Activated B cell treated with CpG ODN at 0.5 μM for 24 hours (primary cell): ENCODE measurements at regions of chr1 and their contacts with region 1.

Region 1: GRCh38 chr1:43358746-43359693 is at the start of gene CDC20:
- DNase-seq: peak; percentile 96
- ATAC-seq: peak; percentile 99
- H3K4me3 Mint-ChIP-seq: peak within 1 kb of the TSS; percentile 91
- H3K27ac Mint-ChIP-seq: peak within 1 kb of the TSS; percentile 91
- H3K4me1 Mint-ChIP-seq: peaks cover 16% of the 10 kb centered on the region
- H3K27me3 Mint-ChIP-seq: no peaks in the 10 kb centered on the region
- CTCF ChIP-seq: no peak
- total RNA-seq, gene CDC20: 3.2 and 4.2 TPM in 2 replicates

Region 2: GRCh38 chr1:43348809-43349583 is 10.0 kb before region 1 on chr1:
- CTCF ChIA-PET with region 1: no interaction called
- POLR2A ChIA-PET with region 1: interaction called, 11 read pairs
- intact Hi-C with region 1: loop called (anchors 1 kb)
- DNase-seq: peak; percentile 65
- ATAC-seq: peak; percentile 86
- H3K4me3 Mint-ChIP-seq: peak overlapping the region; percentile 85
- H3K27ac Mint-ChIP-seq: peak overlapping the region; percentile 88
- H3K4me1 Mint-ChIP-seq: peaks cover 11% of the 10 kb centered on the region
- H3K27me3 Mint-ChIP-seq: no peaks in the 10 kb centered on the region
- CTCF ChIP-seq: no peak

Region 3: DNA sequence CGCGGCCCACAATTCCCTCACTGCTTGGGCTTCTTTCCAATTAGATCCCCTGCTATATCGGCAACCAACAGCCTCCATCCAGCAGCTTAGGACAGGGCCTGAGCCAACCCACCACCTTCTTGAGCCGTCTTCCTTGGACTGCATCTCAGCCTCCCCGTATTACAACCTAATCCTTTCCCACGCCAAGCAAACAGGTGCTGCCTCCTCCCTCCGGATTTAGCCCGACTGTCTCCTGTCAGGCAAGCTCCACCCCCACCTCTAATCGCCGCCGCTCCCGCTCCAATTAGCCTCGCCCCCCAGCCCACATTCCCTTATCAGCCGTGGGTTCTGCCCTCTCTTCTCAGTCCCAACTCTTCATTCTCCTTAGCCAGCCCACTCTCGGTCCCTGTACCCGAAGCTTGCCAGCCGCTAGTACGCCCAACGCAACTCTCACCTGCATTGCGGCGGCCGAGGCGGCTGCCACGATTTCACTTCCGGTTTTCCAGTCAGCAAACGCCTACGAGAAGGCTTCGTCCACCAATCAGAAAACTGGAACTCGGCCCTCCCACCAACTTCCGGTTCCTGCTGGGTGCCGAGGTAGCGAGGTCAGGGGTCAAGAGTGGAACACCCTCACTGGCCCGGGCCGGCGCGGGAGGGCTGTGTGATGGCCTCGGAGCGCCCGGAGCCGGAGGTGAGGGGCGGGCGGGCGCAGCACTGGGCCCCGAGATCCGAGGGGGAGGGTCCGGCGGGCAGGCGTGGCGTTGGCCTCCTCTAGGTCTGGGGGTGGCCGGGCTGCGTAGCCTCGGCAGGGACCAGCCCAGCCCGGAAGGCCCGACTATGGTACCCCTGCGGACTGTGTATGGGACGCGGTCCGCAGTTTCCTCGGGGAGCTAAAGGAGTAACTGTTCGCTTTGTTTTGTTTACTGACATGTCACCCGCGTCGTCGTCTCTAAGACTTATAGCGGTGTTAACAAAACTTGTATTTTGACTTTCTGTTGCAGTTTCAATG is 30.6 kb after region 1 on chr1 and contains the starts of genes MED8 and SZT2:
- CTCF ChIA-PET with region 1: no interaction called
- POLR2A ChIA-PET with region 1: interaction called, 16 read pairs
- intact Hi-C with region 1: loop called (anchors 1 kb)
- DNase-seq: peak; percentile 90
- ATAC-seq: peak; percentile 91
- H3K4me3 Mint-ChIP-seq: peak within 1 kb of the TSS; percentile 99
- H3K27ac Mint-ChIP-seq: peak within 1 kb of the TSS; percentile 91
- H3K4me1 Mint-ChIP-seq: peaks cover 38% of the 10 kb centered on the region
- H3K27me3 Mint-ChIP-seq: no peaks in the 10 kb centered on the region
- CTCF ChIP-seq: no peak
- total RNA-seq, gene MED8: 33.8 and 37.2 TPM in 2 replicates
- total RNA-seq, gene SZT2: 108 and 139 TPM in 2 replicates

Region 4: DNA sequence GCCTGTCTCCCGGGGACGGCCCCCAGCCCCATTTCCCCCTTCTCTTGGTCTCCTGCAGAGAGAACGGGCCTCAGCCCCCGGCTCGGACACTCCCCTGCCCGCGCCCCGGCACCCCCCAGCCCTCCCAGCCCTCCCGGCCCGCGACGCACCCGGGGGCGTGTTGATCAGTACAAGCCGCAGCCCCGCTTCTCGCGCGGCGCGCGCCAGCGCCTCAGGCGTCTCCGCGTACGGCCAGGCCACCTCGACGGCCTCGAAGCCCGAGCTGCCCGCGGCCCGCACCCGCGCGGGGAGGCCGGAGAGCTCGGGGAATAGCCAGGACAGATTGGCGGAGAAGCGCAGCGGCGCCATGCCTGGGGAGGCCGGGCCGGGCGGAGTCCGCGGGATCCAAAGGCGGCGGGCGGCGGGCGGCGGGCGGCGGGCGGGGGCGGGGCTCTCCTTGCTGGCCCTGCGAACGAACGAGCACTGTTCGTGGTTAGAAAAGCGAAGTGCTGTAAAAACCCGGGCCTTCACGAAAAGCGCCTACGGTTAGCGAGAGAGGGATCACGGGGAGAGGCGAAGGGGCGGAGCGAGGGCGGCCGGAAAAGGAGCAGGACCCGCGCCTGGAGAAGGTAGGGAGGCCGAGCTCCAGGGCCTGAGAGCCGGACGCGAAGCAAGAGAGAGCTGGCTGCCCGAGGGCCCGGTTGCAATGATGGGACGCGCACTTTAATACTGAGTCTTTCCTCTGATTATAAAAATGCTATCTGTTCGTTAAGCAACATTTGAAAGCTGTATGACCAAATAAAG is 94.6 kb after region 1 on chr1 and contains the start of gene HYI:
- CTCF ChIA-PET with region 1: no interaction called
- POLR2A ChIA-PET with region 1: no interaction called
- intact Hi-C with region 1: loop called (anchors 2 kb)
- DNase-seq: peak; percentile 50
- ATAC-seq: peak; percentile 65
- H3K4me3 Mint-ChIP-seq: peak within 1 kb of the TSS; percentile 89
- H3K27ac Mint-ChIP-seq: peak within 1 kb of the TSS; percentile 76
- H3K4me1 Mint-ChIP-seq: peaks cover 17% of the 10 kb centered on the region
- H3K27me3 Mint-ChIP-seq: peaks cover 20% of the 10 kb centered on the region
- CTCF ChIP-seq: no peak
- total RNA-seq, gene HYI: 10.0 and 12.3 TPM in 2 replicates